Activated naive CD4-positive, alpha-beta T cell treated with anti-CD3 and anti-CD28 coated beads for 36 hours (primary cell): ENCODE measurements at regions of chr11 and their contacts with region 1.

Region 1: GRCh38 chr11:35237860-35238715 is 99.1 kb downstream of the CD44 start:
- DNase-seq: peak; percentile 79
- H3K4me3 Mint-ChIP-seq: no peak overlapping the region
- H3K27ac Mint-ChIP-seq: peak overlapping the region; percentile 34
- H3K4me1 Mint-ChIP-seq: peaks cover 69% of the 10 kb centered on the region
- H3K27me3 Mint-ChIP-seq: no peaks in the 10 kb centered on the region

Region 2: GRCh38 chr11:34926101-34926830 is 311.8 kb before region 1 on chr11:
- CTCF ChIA-PET with region 1: interaction called, 5 read pairs
- intact Hi-C with region 1: loop called (anchors 1 kb)
- DNase-seq: peak; percentile 22
- H3K4me3 Mint-ChIP-seq: no peak overlapping the region
- H3K27ac Mint-ChIP-seq: no peak overlapping the region
- H3K4me1 Mint-ChIP-seq: peaks cover 17% of the 10 kb centered on the region
- H3K27me3 Mint-ChIP-seq: no peaks in the 10 kb centered on the region

Region 3: GRCh38 chr11:35214792-35215193 is 23.3 kb before region 1 on chr11:
- CTCF ChIA-PET with region 1: interaction called, 3 read pairs
- intact Hi-C with region 1: loop called (anchors 1 kb)
- DNase-seq: peak; percentile 77
- H3K4me3 Mint-ChIP-seq: no peak overlapping the region
- H3K27ac Mint-ChIP-seq: peak overlapping the region; percentile 78
- H3K4me1 Mint-ChIP-seq: peaks cover 62% of the 10 kb centered on the region
- H3K27me3 Mint-ChIP-seq: no peaks in the 10 kb centered on the region